Activated CD8-positive, alpha-beta memory T cell treated with anti-CD3 and anti-CD28 coated beads, Interleukin-2, amount 10 ng/mL, durations not matched to agents 7 days and 5 days (primary cell): ENCODE measurements at regions of chr10 and their contacts with region 1.

Region 1: GRCh38 chr10:12656518-12657142 is 307.3 kb downstream of the CAMK1D start:
- DNase-seq: no peak
- ATAC-seq: peak; percentile 82
- H3K4me3 Mint-ChIP-seq: no peak overlapping the region
- H3K27ac Mint-ChIP-seq: no peak overlapping the region
- H3K4me1 Mint-ChIP-seq: peaks cover 21% of the 10 kb centered on the region
- H3K27me3 Mint-ChIP-seq: no peaks in the 10 kb centered on the region

Region 2: DNA sequence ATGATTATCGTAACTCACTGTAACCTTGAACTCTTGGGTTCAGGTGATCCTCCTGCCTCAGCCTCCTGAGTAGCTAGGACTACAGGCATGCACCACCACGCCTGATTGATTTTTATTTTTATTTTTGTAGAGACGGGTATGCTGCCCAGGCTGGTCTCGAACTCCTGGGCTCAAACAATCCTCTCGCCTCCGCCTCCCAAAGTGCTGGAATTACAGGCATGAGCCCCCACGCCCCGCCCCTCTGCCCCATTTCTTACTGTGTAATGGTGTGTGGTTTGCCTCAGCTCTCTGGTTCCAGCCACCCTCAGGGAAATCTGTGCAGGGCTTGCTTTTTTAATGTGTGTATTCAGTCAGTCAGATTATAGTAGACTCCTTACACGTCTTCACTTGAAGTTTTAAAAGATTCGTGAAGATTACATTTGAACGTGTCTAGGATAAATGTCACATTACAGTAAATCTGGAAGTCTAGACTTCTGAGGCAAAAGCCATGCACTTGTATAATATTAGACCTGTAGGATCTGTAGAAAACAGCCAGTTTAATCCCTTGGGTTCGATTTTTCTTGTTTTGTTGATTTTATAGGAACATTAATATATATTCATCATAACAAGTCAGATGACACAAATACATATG is 31.1 kb before region 1 on chr10:
- CTCF ChIA-PET with region 1: no interaction called
- DNase-seq: peak; percentile 23
- ATAC-seq: no peak
- H3K4me3 Mint-ChIP-seq: no peak overlapping the region
- H3K27ac Mint-ChIP-seq: no peak overlapping the region
- H3K4me1 Mint-ChIP-seq: peaks cover 8% of the 10 kb centered on the region
- H3K27me3 Mint-ChIP-seq: no peaks in the 10 kb centered on the region

Region 3: GRCh38 chr10:12638103-12638502 is 18.5 kb before region 1 on chr10:
- CTCF ChIA-PET with region 1: interaction called, 13 read pairs
- DNase-seq: peak; percentile 48
- ATAC-seq: peak; percentile 45
- H3K4me3 Mint-ChIP-seq: no peak overlapping the region
- H3K27ac Mint-ChIP-seq: no peak overlapping the region
- H3K4me1 Mint-ChIP-seq: peaks cover 14% of the 10 kb centered on the region
- H3K27me3 Mint-ChIP-seq: no peaks in the 10 kb centered on the region

Region 4: GRCh38 chr10:12644380-12645144 is 12.1 kb before region 1 on chr10:
- CTCF ChIA-PET with region 1: interaction called, 31 read pairs
- DNase-seq: peak; percentile 54
- ATAC-seq: peak; percentile 51
- H3K4me3 Mint-ChIP-seq: no peak overlapping the region
- H3K27ac Mint-ChIP-seq: peak overlapping the region; percentile 38
- H3K4me1 Mint-ChIP-seq: peaks cover 19% of the 10 kb centered on the region
- H3K27me3 Mint-ChIP-seq: no peaks in the 10 kb centered on the region

Region 5: DNA sequence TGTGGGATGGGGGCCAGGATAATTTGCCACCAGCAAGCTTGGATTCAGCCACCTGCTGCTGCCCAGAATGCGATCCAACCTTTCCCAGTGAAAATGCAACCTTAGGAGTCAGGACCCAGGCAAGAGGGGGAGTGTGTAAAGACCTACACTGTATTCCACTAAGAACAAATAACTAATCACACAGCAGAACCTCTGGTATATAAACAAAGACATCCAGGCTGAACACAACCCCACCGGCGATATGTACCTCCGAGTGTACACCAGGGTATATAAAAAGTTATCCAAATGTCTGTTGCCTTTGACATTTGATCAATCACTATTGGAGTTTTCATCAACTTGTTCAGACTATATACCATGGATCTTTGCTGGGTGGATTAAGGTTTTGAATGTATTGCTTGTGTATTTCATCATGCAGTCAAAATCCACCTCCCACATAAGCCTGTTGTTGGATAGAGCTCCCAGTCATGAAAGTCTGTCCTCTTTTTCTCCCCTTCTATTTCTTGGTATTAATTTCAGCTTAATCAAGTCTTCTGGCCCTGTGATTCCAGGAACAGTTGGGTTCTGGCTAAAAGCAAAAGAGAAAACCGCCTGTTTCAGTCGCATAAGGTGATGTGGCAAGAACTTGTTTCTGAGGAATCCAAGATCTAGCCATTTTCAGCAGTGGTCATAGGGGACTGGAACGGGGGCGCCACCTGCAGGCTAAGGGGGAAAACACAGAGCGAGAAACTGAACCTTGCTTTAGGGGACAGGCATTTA is 54.1 kb after region 1 on chr10:
- CTCF ChIA-PET with region 1: interaction called, 19 read pairs
- DNase-seq: peak; percentile 86
- ATAC-seq: peak; percentile 92
- H3K4me3 Mint-ChIP-seq: no peak overlapping the region
- H3K27ac Mint-ChIP-seq: peak overlapping the region; percentile 67
- H3K4me1 Mint-ChIP-seq: peaks cover 51% of the 10 kb centered on the region
- H3K27me3 Mint-ChIP-seq: no peaks in the 10 kb centered on the region